ENCODE measurements at regions of chr22 and their contacts with region 1.

Region 1: DNA sequence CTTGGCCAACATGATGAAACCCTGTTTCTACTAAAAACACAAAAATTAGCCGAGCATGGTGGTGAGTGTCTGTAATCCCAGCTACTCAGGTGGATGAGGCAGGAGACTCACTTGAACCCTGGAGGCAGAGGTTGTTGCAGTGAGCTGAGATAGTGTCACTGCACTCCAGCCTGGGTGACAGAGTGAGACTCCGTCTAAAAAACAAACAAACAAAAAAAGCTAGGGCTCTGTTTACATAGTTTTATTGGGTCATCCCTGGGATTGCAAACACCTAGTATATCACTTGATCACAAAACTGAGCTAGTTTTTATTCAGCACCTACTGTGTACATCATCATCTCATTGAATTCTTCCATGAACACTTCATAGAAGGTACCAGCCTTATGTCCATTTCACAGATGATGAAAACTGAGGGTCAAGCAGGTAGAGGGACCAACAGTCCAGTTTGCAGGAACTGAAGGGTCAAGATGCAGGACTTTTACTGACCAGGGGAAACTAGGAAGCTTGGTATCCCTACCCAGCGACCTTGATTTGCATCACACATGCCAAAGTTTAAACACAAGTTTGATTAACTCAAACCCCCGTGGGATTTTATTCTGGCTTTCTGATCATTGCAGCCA is 9.2 kb upstream of the MRTFA start:
- DNase-seq: no peak
- ATAC-seq: no peak
- H3K4me3 Mint-ChIP-seq: no peak overlapping the region
- H3K27ac Mint-ChIP-seq: no peak overlapping the region
- H3K4me1 Mint-ChIP-seq: no peaks in the 10 kb centered on the region
- H3K27me3 Mint-ChIP-seq: no peaks in the 10 kb centered on the region
- CTCF ChIP-seq: no peak

Region 2: DNA sequence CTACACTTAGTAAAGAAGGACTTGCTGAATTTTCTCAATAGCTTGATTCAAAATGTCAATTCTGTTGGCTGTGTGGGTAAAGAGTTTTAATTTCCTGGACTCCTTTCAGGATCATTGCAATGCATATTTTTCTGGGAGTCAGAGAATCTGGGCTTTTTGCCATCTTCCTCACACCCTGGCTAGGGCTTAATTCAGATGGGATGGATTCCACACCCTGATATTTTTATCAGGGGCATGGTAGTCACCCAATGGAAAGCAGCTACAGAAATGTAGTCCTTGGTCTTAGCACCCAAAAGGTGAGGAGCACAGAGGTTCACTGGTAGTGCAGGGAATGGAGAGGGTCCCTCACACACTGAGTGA is 196.0 kb before region 1 on chr22:
- CTCF ChIA-PET with region 1: interaction called, 15 read pairs
- POLR2A ChIA-PET with region 1: no interaction called
- intact Hi-C with region 1: no loop called
- DNase-seq: no peak
- ATAC-seq: no peak
- H3K4me3 Mint-ChIP-seq: no peak overlapping the region
- H3K27ac Mint-ChIP-seq: no peak overlapping the region
- H3K4me1 Mint-ChIP-seq: peaks cover 69% of the 10 kb centered on the region
- H3K27me3 Mint-ChIP-seq: no peaks in the 10 kb centered on the region
- CTCF ChIP-seq: no peak

Region 3: GRCh38 chr22:40463017-40463631 is 182.6 kb before region 1 on chr22:
- CTCF ChIA-PET with region 1: interaction called, 11 read pairs
- POLR2A ChIA-PET with region 1: interaction called, 3 read pairs
- intact Hi-C with region 1: no loop called
- DNase-seq: peak; percentile 78
- ATAC-seq: peak; percentile 83
- H3K4me3 Mint-ChIP-seq: peak overlapping the region; percentile 95
- H3K27ac Mint-ChIP-seq: peak overlapping the region; percentile 100
- H3K4me1 Mint-ChIP-seq: peaks cover 53% of the 10 kb centered on the region
- H3K27me3 Mint-ChIP-seq: no peaks in the 10 kb centered on the region
- CTCF ChIP-seq: no peak

Region 4: GRCh38 chr22:40487663-40488249 is 157.9 kb before region 1 on chr22:
- CTCF ChIA-PET with region 1: interaction called, 13 read pairs
- POLR2A ChIA-PET with region 1: no interaction called
- intact Hi-C with region 1: no loop called
- DNase-seq: no peak
- ATAC-seq: peak; percentile 57
- H3K4me3 Mint-ChIP-seq: no peak overlapping the region
- H3K27ac Mint-ChIP-seq: peak overlapping the region; percentile 25
- H3K4me1 Mint-ChIP-seq: peaks cover 45% of the 10 kb centered on the region
- H3K27me3 Mint-ChIP-seq: no peaks in the 10 kb centered on the region
- CTCF ChIP-seq: peak; percentile 94

Region 5: GRCh38 chr22:40519284-40519947 is 126.3 kb before region 1 on chr22:
- CTCF ChIA-PET with region 1: interaction called, 87 read pairs
- POLR2A ChIA-PET with region 1: interaction called, 3 read pairs
- intact Hi-C with region 1: no loop called
- DNase-seq: peak; percentile 22
- ATAC-seq: peak; percentile 89
- H3K4me3 Mint-ChIP-seq: peak overlapping the region; percentile 67
- H3K27ac Mint-ChIP-seq: peak overlapping the region; percentile 96
- H3K4me1 Mint-ChIP-seq: peaks cover 36% of the 10 kb centered on the region
- H3K27me3 Mint-ChIP-seq: no peaks in the 10 kb centered on the region
- CTCF ChIP-seq: no peak

Region 6: DNA sequence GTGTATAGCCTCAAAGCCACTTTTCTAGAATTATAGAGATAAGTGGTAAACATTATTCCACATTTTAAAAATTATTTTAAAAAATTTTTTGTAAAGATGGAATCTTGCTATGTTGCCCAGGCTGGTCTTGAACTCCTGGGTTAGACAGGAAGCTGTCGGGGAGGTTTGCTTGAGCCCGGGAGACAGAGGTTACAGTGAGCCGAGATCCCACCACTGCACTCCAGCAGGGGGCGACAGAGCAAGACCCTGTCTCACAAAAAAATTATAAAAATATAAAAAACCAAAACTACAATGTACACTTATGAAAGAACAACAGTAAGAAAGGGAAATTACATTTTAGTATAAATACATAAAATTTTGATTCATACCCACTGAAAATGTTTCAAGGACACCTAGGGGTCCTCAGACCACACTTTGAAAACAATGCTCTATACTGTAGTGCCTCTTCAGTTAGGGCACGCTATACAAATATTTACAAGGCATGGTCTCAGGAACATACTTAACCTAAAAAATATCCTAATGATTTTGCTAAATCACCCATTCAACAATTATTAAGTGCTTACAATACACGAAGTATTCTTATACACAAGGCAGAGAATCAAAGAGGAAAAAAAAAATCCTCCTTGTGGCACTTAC is 120.3 kb before region 1 on chr22:
- CTCF ChIA-PET with region 1: interaction called, 87 read pairs
- POLR2A ChIA-PET with region 1: interaction called, 3 read pairs
- intact Hi-C with region 1: loop called (anchors 5 kb)
- DNase-seq: peak; percentile 85
- ATAC-seq: peak; percentile 69
- H3K4me3 Mint-ChIP-seq: no peak overlapping the region
- H3K27ac Mint-ChIP-seq: no peak overlapping the region
- H3K4me1 Mint-ChIP-seq: peaks cover 43% of the 10 kb centered on the region
- H3K27me3 Mint-ChIP-seq: no peaks in the 10 kb centered on the region
- CTCF ChIP-seq: peak; percentile 91

Region 7: DNA sequence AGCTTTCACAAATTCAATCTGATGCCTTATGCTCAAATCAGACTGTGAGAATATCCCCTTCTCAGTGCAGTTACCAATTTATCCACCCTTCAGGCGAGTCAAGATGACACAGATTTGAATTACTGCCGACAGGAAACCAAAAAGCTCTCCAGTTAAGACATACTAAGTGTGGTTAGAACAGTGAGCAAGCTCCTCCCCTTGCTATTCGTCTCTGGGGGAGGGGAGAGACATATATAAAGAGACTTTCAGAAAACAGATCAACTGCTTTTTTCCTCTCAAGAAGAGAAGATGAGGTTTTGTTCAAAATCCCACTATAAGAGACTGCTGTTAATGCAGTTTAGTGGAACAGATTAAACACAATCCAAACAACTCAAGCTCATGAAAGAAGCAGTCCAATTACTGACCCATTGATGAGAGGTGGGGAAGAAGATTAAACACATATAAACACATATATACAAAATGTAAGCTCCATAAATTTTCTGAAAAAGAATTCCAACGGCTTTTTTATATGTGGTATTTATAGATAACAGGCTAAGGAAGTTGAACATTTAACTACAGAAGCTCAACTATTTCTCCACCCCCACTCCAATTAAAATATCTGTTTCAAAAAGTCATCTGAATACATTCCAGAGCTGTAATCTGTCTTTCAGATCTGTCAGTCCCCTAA is 111.8 kb before region 1 on chr22:
- CTCF ChIA-PET with region 1: interaction called, 17 read pairs
- POLR2A ChIA-PET with region 1: interaction called, 3 read pairs
- intact Hi-C with region 1: loop called (anchors 5 kb)
- DNase-seq: peak; percentile 77
- ATAC-seq: peak; percentile 95
- H3K4me3 Mint-ChIP-seq: peak overlapping the region; percentile 74
- H3K27ac Mint-ChIP-seq: peak overlapping the region; percentile 83
- H3K4me1 Mint-ChIP-seq: peaks cover 61% of the 10 kb centered on the region
- H3K27me3 Mint-ChIP-seq: no peaks in the 10 kb centered on the region
- CTCF ChIP-seq: no peak

Measured in activated CD8-positive, alpha-beta T cell treated with anti-CD3 and anti-CD28 coated beads for 36 hours (primary cell).